Pancreas (tissue), 10 donors: ENCODE measurements at regions of chr11 and their contacts with region 1.

Region 1: DNA sequence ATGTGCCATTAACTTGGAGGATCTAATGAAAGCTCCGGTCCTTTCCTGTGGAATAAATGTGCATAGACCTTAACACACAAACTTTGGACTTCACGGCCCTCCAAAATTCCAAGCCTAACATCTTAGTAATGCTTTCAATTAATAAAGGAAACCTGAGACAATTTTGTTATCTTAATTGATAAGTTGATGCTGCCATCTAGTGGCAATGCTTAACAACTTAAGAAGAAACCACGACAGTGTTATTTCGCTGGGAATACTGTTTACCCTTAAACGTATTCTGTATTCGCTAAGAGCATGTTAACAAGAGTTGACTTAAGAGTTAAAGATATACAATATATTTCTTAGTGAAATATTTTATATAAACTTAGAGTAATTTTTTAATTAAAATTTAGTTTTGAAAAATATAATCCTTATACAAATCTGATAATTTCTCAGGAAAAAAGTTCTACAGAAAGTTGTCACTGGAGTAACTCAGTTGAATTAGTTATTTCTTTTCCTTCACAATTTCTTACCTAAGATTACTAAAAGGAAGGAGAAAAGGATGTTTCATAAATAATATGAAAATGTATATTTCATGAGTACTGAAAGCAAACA is 35.0 kb upstream of the OR9G4 start:
- DNase-seq: peak in 1 of 6 donors; percentile 7
- ATAC-seq: peak in 3 of 4 donors; percentile 52 to 65 (median 52)
- H3K4me3 ChIP-seq: no peak overlapping the region
- H3K27ac ChIP-seq: no peak overlapping the region
- H3K4me1 ChIP-seq: no peaks in the 10 kb centered on the region
- H3K27me3 ChIP-seq: no peaks in the 10 kb centered on the region
- CTCF ChIP-seq: peak; percentile 26 to 63 (median 50)

Region 2: DNA sequence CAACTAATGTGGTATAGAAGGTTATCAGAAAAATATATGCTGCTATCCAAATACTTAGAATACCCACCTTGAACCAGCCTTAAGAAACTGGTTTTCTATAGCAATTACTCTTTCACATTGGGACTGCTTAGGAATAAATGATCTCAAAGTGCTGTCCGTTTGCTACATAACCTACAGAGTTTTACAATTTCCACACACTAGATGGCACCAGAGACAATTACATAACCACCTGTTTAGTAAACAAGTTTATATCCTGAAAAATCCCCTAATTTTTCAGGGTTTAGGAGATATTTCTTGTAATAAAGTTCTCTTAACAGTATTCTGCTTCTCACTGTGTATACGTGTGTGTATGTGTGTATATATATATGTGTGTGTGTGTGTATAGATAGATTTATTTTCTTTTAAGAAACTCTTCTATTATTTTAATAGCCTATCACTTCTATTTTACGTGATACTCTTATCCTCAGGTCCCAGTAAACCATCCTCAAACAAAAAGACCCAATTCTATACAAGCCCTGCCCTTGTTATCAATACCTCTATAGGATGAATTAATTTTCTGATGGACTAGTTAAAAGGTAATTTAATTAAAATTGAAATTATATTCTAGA is 840.7 kb before region 1 on chr11:
- intact Hi-C with region 1: loop called in 1 of 3 experiments (anchors 10 kb)
- DNase-seq: no peak
- ATAC-seq: peak in 3 of 4 donors; percentile 58 to 67 (median 64)
- H3K4me3 ChIP-seq: no peak overlapping the region
- H3K27ac ChIP-seq: no peak overlapping the region
- H3K4me1 ChIP-seq: no peaks in the 10 kb centered on the region
- H3K27me3 ChIP-seq: peaks cover 0 to 6% (median 0%) of the 10 kb centered on the region in 4 donors
- CTCF ChIP-seq: peak in 3 of 4 donors; percentile 16 to 42 (median 19)

Region 3: DNA sequence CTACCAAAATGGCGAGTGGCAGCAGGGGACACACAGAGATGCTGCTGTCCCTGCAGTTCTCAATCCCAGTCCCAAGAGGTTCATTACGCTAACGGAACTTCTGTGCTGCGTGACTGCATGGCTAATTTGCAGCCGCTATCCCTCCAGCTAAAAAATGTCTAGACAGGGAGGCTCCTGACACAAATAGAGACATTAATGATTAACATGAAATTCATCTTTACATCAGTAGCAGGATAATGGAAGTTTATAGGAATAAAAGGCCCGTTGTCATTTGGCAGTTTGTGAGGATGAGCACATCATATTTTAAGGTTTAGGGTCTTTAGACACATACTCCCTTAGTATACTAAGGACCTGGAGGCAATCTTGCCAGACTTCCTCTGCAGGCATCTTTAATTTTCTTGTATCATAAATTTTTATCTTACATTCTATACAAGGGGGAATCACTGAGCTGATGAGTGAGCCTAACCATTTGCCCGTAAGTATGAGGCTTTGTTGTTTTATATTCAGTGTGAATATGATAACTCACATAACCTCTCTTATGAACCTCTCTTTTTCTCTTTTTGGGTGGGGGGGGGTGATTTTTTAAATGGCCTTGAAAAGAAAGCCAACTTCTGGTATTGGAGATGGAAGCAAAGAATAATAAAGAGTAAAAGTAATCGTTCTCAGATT is 64.7 kb after region 1 on chr11:
- intact Hi-C with region 1: no loop called
- DNase-seq: no peak
- ATAC-seq: no peak
- H3K4me3 ChIP-seq: no peak overlapping the region
- H3K27ac ChIP-seq: no peak overlapping the region
- H3K4me1 ChIP-seq: no peaks in the 10 kb centered on the region
- H3K27me3 ChIP-seq: no peaks in the 10 kb centered on the region
- CTCF ChIP-seq: no peak